Activated B cell treated with CpG ODN at 0.5 μM for 24 hours (primary cell): ENCODE measurements at regions of chr1 and their contacts with region 1.

Region 1: DNA sequence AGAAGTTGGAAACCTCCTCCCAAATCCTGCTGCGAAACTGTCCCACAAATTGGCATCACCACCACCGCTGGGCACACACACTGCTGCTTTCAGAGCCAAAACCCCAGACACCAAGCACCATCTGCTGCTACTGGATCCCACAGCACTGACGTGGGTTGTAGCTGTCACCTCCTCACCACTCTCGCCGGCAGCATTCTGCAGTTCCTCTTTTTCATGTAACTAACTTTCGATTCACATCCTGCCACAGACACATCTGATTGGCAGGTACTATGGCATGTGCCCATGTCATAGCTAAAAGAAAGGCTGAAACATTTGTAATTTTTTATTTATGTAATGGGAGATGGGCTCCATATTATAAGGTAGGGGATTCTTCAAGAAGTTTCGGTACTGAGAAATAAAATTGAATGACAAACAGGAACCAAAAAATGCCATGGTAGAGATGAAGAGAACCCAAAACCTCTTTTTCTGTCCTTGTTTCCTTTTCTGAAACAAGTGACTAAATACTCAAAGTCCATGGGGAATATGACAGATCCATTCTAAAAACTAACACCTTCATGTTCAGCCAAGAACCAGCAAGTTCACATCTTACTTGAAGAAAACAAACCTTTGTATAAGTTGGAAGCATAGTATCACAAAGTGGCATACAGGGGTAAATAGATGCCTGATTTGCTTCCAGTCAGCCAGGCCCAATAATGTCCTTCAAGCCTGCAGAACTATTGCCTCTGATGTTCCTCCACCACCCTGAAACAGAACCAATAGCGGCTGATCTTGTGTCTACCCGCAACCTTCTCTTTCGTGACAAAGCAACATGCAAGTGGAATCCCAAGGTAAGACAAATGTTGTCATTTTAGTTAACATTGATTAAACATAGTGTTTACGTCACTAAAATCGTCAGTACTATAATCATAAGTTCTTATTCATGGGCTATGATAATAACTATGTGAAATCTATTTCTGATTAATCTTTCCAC is 26.6 kb upstream of the RGS13 start:
- DNase-seq: peak; percentile 56
- ATAC-seq: peak; percentile 91
- H3K4me3 Mint-ChIP-seq: peak overlapping the region; percentile 57
- H3K27ac Mint-ChIP-seq: peak overlapping the region; percentile 86
- H3K4me1 Mint-ChIP-seq: peaks cover 32% of the 10 kb centered on the region
- H3K27me3 Mint-ChIP-seq: peaks cover 4% of the 10 kb centered on the region
- CTCF ChIP-seq: no peak

Region 2: DNA sequence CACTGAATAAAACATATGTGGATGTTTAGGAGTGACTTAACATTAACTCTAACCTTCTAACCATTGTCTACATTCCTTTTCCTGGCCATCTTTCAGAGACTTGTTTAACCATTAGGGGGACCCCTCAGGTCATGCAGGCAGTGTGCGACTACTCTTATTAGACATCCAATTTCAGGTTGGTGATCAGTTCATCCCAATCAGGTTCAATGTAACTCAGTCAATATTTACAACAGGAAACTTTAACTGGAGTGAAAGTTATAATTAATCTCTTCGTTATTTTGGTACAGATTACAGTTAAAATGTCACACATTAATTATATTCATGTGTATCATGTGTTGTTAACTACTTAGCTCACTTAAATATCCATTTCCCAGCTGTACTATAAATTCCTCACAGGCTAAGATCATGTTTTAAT is 102.6 kb before region 1 on chr1:
- CTCF ChIA-PET with region 1: interaction called, 16 read pairs
- POLR2A ChIA-PET with region 1: no interaction called
- intact Hi-C with region 1: loop called (anchors 1 kb)
- DNase-seq: no peak
- ATAC-seq: peak; percentile 79
- H3K4me3 Mint-ChIP-seq: no peak overlapping the region
- H3K27ac Mint-ChIP-seq: no peak overlapping the region
- H3K4me1 Mint-ChIP-seq: peaks cover 5% of the 10 kb centered on the region
- H3K27me3 Mint-ChIP-seq: peaks cover 8% of the 10 kb centered on the region
- CTCF ChIP-seq: no peak

Region 3: DNA sequence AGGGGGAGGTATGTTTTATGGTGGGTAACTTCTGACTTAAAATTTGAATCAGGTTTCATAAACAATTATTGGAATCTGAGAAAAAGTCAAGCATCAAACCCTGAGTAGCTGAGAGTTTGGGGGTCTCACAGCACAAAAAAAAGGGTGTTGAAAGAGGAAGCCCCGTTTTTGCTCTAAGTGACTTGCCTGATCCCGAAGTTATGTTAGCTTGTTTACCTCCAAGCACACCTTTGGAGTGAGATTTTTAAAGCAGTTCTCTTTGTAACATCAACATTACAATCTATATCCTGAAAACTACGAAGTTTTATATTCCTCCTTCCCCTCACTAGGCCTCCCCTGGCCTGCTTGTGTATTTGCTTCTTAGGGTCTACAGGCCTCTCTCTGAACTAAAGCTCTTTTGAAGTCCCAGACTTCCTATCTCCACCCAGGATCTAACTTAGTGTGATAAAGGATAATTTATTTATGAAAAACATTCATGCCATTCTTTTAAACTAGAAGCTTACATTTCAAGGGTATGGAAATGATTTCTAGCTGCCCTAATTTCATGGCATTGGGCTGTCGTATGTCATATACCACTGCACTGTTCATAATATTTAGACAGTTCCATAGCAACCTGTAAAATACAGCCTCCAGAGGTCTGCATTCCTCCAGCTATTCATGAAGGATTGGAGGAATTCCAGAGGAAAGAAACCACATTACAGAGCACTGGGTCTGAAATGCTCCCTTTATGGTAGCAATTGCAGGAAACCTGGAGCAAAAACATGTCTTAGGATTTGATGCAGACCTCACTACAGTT is 69.9 kb before region 1 on chr1:
- CTCF ChIA-PET with region 1: interaction called, 14 read pairs
- POLR2A ChIA-PET with region 1: interaction called, 12 read pairs
- intact Hi-C with region 1: loop called (anchors 1 kb)
- DNase-seq: no peak
- ATAC-seq: peak; percentile 25
- H3K4me3 Mint-ChIP-seq: peak overlapping the region; percentile 69
- H3K27ac Mint-ChIP-seq: peak overlapping the region; percentile 86
- H3K4me1 Mint-ChIP-seq: peaks cover 61% of the 10 kb centered on the region
- H3K27me3 Mint-ChIP-seq: no peaks in the 10 kb centered on the region
- CTCF ChIP-seq: no peak

Region 4: GRCh38 chr1:192550922-192551534 is 58.4 kb before region 1 on chr1:
- CTCF ChIA-PET with region 1: interaction called, 3 read pairs
- POLR2A ChIA-PET with region 1: interaction called, 12 read pairs
- intact Hi-C with region 1: loop called (anchors 2 kb)
- DNase-seq: no peak
- ATAC-seq: peak; percentile 38
- H3K4me3 Mint-ChIP-seq: peak overlapping the region; percentile 39
- H3K27ac Mint-ChIP-seq: peak overlapping the region; percentile 69
- H3K4me1 Mint-ChIP-seq: peaks cover 63% of the 10 kb centered on the region
- H3K27me3 Mint-ChIP-seq: no peaks in the 10 kb centered on the region
- CTCF ChIP-seq: no peak

Region 5: DNA sequence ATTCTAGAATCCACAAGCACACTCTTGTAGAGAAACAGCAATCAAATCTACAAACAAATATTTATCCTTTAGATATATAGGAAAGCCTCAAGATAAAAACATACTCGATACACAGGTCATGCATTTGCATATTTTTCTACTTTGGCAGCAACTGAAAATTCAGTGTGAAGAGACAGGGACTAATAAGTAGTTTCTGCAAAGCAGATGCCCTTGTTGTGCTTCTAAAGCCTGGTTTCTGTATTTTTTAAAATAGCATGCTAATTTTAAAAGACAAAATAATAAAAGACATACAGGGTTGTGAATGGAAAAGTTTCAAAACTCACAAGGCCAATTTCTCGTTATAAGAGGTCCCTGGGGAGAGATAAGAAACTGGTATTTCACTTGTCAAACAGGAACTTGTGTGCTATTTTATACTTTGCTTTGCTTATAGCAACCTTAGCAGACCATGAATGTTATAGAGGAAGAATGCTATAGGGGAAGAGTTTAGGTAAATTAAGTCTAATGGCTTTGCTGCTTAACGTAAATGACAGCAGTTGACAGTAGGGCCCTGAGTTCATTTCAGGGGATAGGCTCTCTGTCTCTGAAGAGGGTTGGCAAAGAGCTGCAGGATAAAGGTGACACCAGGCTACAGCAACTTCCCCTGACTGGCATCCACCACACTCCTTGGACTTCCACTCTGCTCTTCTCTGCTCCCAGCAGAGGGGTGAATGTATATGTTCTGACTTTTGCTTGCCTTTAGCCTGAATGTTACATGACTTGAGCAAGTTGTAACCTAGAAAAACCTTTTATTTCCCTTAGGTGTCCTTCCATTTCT is 17.2 kb after region 1 on chr1:
- CTCF ChIA-PET with region 1: interaction called, 3 read pairs
- POLR2A ChIA-PET with region 1: no interaction called
- intact Hi-C with region 1: loop called (anchors 1 kb)
- DNase-seq: no peak
- ATAC-seq: peak; percentile 90
- H3K4me3 Mint-ChIP-seq: peak overlapping the region; percentile 44
- H3K27ac Mint-ChIP-seq: no peak overlapping the region
- H3K4me1 Mint-ChIP-seq: peaks cover 19% of the 10 kb centered on the region
- H3K27me3 Mint-ChIP-seq: peaks cover 65% of the 10 kb centered on the region
- CTCF ChIP-seq: no peak

Region 6: GRCh38 chr1:193059268-193060225 is 450.2 kb after region 1 on chr1 and contains the starts of genes RO60 and UCHL5:
- CTCF ChIA-PET with region 1: no interaction called
- POLR2A ChIA-PET with region 1: interaction called, 3 read pairs
- intact Hi-C with region 1: loop called (anchors 1 kb)
- DNase-seq: peak; percentile 85
- ATAC-seq: peak; percentile 94
- H3K4me3 Mint-ChIP-seq: peak within 1 kb of the TSS; percentile 100
- H3K27ac Mint-ChIP-seq: peak within 1 kb of the TSS; percentile 99
- H3K4me1 Mint-ChIP-seq: peaks cover 54% of the 10 kb centered on the region
- H3K27me3 Mint-ChIP-seq: no peaks in the 10 kb centered on the region
- CTCF ChIP-seq: no peak
- total RNA-seq, gene RO60: 55.9 and 61.1 TPM in 2 replicates
- total RNA-seq, gene UCHL5: 32.3 and 36.4 TPM in 2 replicates